Ovary (tissue), 10 donors: ENCODE measurements at regions of chr10 and their contacts with region 1.

Region 1: DNA sequence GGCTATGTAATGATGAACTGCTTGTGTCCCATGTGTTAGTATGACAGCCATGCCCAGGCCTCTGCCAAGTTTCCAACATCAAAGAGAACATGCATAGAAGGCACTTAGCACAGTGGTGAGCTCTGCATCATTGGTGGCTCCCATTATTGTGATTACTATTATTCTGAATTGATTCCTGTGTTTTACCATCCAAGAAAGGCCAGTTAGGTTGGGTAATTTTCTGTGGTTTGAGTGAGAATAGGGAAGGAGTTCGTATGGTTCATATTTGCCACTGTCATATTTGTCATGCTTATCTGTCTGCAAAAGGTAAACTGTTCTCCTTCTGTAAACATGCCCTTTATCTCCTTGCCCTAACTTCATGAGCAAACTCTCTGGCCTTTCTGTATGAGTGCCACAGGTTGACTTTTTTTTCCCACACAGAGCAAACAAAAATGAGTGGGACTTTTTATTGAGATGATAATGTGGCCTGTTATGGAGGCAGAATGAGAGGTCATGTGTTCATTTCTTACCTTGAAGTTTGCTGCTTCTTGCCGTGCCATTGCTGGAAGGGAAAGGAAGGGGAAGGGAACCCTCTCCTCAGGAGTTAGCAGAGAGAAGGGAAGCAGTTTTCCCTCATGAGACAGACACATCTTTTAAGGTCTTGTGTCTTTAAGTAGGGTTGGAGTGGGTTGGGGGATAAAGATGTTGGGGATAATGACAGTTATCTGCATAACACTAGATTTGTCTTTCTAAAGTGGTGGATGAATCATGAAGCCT is 301.9 kb downstream of the LRMDA start:
- DNase-seq: no peak
- H3K4me3 ChIP-seq: no peak overlapping the region
- H3K27ac ChIP-seq: no peak overlapping the region
- H3K4me1 ChIP-seq: no peaks in the 10 kb centered on the region
- H3K27me3 ChIP-seq: no peaks in the 10 kb centered on the region
- CTCF ChIP-seq: no peak
- EP300 ChIP-seq: no peak
- POLR2A ChIP-seq: no peak

Region 2: GRCh38 chr10:75682649-75683557 is 50.4 kb before region 1 on chr10:
- intact Hi-C with region 1: no loop called
- DNase-seq: peak in 1 of 5 donors; percentile 41
- H3K4me3 ChIP-seq: no peak overlapping the region
- H3K27ac ChIP-seq: no peak overlapping the region
- H3K4me1 ChIP-seq: no peaks in the 10 kb centered on the region
- H3K27me3 ChIP-seq: no peaks in the 10 kb centered on the region
- CTCF ChIP-seq: no peak
- EP300 ChIP-seq: no peak
- POLR2A ChIP-seq: no peak

Region 3: GRCh38 chr10:75746356-75746755 is 13.0 kb after region 1 on chr10:
- intact Hi-C with region 1: loop called in 1 of 4 experiments (anchors 1 kb)
- DNase-seq: no peak
- H3K4me3 ChIP-seq: no peak overlapping the region
- H3K27ac ChIP-seq: no peak overlapping the region
- H3K4me1 ChIP-seq: no peaks in the 10 kb centered on the region
- H3K27me3 ChIP-seq: no peaks in the 10 kb centered on the region
- CTCF ChIP-seq: no peak
- EP300 ChIP-seq: no peak
- POLR2A ChIP-seq: no peak

Region 4: DNA sequence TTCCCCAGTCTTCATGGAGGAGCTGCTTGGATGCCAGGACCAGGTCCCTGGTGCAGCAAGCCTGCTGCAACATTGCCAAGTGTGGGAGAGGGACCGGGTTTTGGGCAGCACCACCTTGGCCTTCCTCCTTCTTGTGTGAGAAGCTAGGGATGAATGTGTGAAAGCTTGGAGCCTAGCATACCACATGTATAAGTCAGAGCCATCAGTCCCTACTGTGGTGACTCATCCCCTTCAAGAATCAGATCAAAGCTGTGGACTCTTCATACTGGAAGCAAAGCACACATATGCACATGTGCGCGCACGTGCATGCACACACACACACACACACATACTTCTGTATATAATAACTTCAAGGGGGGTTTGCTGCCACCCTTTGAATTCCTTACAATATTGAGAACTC is 225.9 kb after region 1 on chr10:
- intact Hi-C with region 1: no loop called
- DNase-seq: no peak
- H3K4me3 ChIP-seq: no peak overlapping the region
- H3K27ac ChIP-seq: no peak overlapping the region
- H3K4me1 ChIP-seq: peaks cover 4% of the 10 kb centered on the region
- H3K27me3 ChIP-seq: no peaks in the 10 kb centered on the region
- CTCF ChIP-seq: no peak
- EP300 ChIP-seq: no peak
- POLR2A ChIP-seq: no peak